HCT116 (cell line): ENCODE measurements at regions of chr17 and their contacts with region 1.

Region 1: DNA sequence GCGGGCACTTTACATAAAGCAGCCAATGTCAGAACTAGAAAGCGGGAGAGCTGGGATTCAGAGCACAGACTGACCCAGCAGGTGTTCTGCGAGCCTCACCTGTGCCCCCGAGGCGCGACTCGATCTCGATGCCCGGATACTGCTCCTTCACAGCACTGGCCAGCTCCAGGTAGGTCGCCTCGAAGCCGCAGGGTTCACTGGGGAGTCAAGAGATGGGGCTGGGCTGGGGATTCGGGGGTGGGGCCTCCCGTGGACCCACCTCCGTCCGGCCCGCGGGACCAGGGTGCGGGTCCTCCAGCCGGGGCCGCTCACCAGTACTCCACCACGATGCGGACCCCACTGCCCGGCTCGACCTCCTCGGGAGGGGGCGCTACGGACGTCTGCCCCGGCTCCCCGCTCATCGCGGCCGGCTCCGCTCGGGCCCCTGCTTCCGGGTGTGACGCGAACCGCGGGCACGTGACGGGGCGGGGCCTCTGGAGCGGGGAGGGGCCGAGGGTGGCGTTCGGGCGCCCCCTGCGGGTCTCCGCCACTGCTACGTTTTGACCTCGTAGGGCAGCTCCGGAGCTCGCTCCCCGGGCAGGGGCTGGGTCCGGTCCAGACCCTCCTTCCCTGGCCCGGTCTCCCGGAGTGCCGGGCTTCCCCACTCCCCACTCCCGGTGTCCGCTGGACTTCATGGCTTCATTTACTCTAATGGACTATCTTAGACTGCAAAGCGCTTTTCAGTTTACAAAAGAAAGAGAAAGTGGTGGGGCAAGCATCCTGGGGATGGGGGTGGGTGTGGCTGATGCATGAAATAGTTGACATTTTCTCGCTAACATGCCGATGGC is at the start of gene MIEN1:
- DNase-seq: peak; percentile 64
- ATAC-seq: peak; percentile 89
- H3K4me3 ChIP-seq: peak within 1 kb of the TSS; percentile 69 to 73
- H3K27ac ChIP-seq: peak within 1 kb of the TSS; percentile 77
- H3K4me1 ChIP-seq: peaks cover 3 to 24% of the 10 kb centered on the region in 2 experiments; a peak in 3 of 4 replicates
- H3K27me3 ChIP-seq: no peaks in the 10 kb centered on the region
- CTCF ChIP-seq: peak; percentile 71 to 87 (median 82)
- POLR2A ChIP-seq: peak; percentile 55
- RAD21 ChIP-seq: peak; percentile 75
- total RNA-seq, gene MIEN1: 73.9 TPM

Region 2: DNA sequence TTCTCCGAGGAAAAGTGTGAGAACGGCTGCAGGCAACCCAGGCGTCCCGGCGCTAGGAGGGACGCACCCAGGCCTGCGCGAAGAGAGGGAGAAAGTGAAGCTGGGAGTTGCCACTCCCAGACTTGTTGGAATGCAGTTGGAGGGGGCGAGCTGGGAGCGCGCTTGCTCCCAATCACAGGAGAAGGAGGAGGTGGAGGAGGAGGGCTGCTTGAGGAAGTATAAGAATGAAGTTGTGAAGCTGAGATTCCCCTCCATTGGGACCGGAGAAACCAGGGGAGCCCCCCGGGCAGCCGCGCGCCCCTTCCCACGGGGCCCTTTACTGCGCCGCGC is 30.5 kb before region 1 on chr17 and contains the start of gene ERBB2:
- CTCF ChIA-PET with region 1: interaction called, 14 read pairs
- POLR2A ChIA-PET with region 1: interaction called, 6 read pairs
- RAD21 ChIA-PET with region 1: no interaction called
- intact Hi-C with region 1: no loop called
- DNase-seq: peak; percentile 57
- ATAC-seq: peak; percentile 92
- H3K4me3 ChIP-seq: peak within 1 kb of the TSS; percentile 76 to 88
- H3K27ac ChIP-seq: peak within 1 kb of the TSS; percentile 76
- H3K4me1 ChIP-seq: peaks cover 20 to 44% of the 10 kb centered on the region in 2 experiments
- H3K27me3 ChIP-seq: no peaks in the 10 kb centered on the region
- CTCF ChIP-seq: no peak
- POLR2A ChIP-seq: peak; percentile 66
- RAD21 ChIP-seq: no peak
- total RNA-seq, gene ERBB2: 75.8 TPM

Region 3: GRCh38 chr17:39704821-39705551 is 25.3 kb before region 1 on chr17:
- CTCF ChIA-PET with region 1: interaction called, 14 read pairs
- POLR2A ChIA-PET with region 1: interaction called, 6 read pairs
- RAD21 ChIA-PET with region 1: no interaction called
- intact Hi-C with region 1: no loop called
- DNase-seq: no peak
- ATAC-seq: no peak
- H3K4me3 ChIP-seq: peak overlapping the region in 1 of 2 experiments; percentile 42; a peak in 2 of 4 replicates
- H3K27ac ChIP-seq: peak overlapping the region; percentile 61
- H3K4me1 ChIP-seq: peaks cover 37 to 55% of the 10 kb centered on the region in 2 experiments
- H3K27me3 ChIP-seq: no peaks in the 10 kb centered on the region
- CTCF ChIP-seq: peak in 2 of 3 experiments; percentile 35 to 47; a peak in 4 of 6 replicates
- POLR2A ChIP-seq: no peak
- RAD21 ChIP-seq: no peak

Region 4: DNA sequence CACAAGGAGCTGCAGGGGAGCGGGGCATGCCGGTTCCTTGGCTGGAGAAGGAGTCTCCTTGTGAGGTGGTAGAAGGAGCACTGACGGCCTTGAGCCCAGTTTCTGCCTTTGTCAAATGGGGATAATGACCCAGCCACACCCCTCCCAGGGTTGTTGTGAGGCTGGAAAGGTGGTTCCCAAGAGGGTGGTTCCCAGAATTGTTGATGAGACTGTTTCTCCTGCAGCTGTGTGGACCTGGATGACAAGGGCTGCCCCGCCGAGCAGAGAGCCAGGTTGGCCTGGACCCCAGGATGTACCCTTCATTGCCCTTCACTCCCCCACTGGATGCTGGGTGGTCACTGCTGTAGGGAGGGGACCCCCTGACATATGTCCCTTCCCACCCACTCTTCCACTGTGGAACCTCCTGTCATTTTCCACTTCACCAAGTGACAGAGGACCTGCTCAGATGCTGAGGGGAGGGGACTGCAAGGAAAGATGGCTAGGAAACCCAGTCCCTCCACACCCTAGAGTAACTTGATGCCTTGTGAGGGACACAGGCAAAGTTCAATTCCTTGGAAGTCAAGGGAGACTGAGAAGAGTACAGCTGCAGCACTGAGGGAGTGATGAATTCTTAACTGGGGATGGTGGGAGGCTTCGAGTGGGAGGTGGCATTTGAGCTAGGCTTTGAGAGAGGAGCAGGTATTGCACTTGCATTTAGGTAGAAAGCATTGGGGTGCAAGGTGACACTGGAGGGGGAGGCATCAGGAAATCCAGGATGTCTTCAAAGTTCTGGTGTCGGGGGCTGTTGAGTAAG is 10.5 kb before region 1 on chr17:
- CTCF ChIA-PET with region 1: interaction called, 27 read pairs
- POLR2A ChIA-PET with region 1: no interaction called
- RAD21 ChIA-PET with region 1: no interaction called
- intact Hi-C with region 1: no loop called
- DNase-seq: no peak
- ATAC-seq: no peak
- H3K4me3 ChIP-seq: no peak overlapping the region
- H3K27ac ChIP-seq: no peak overlapping the region
- H3K4me1 ChIP-seq: peaks cover 3 to 9% of the 10 kb centered on the region in 2 experiments; a peak in 2 of 4 replicates
- H3K27me3 ChIP-seq: no peaks in the 10 kb centered on the region
- CTCF ChIP-seq: no peak
- POLR2A ChIP-seq: no peak
- RAD21 ChIP-seq: no peak

Region 5: DNA sequence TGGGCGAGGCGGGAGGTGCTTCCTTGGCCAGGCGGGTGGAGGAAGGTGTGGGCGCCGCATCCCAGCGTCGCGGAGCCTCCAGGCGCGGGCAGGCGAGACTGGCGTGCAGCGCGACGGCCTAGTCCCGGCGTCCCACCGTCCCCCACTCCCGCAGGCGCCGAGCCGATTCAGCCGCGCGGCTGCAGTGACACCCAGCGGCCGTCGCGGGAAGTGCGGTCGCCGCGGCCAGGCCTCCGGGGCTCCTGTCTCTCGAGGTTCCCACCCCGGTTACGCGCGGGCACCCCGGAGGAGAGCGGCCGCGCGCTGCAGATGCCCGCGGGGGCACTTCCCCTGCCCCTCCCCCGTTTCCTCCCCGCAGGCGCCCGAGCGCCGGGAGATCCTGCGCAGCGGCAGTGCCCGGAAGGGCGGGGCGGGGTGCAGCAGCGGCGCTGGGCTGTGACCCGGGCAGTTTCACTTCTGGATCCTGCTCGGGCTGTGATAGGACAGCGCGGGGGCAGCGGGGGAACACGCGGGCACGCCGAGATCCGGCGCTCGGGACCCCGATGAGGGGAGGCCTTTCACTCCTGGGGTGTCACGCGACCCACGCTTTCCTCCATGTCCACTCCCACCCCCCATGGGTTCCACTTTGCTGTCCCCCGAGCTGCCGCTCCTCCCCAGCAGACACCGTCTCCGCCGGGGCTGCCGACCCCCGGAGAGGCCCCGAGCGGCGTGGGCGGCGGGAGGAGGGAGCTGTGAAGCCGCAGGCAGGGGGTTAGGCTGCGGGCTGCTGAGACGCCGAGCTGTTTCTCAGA is 24.0 kb after region 1 on chr17:
- CTCF ChIA-PET with region 1: interaction called, 10 read pairs
- POLR2A ChIA-PET with region 1: no interaction called
- RAD21 ChIA-PET with region 1: no interaction called
- intact Hi-C with region 1: no loop called
- DNase-seq: peak; percentile 73
- ATAC-seq: peak; percentile 87
- H3K4me3 ChIP-seq: peak overlapping the region; percentile 54 to 65
- H3K27ac ChIP-seq: peak overlapping the region; percentile 91
- H3K4me1 ChIP-seq: peaks cover 33 to 55% of the 10 kb centered on the region in 2 experiments
- H3K27me3 ChIP-seq: peaks cover under 1% of the 10 kb centered on the region; the same call in 1 of the 2 replicates
- CTCF ChIP-seq: peak; percentile 72 to 95 (median 74)
- POLR2A ChIP-seq: peak; percentile 78
- RAD21 ChIP-seq: peak; percentile 97

Region 6: GRCh38 chr17:39952680-39953470 is 222.6 kb after region 1 on chr17:
- CTCF ChIA-PET with region 1: no interaction called
- POLR2A ChIA-PET with region 1: no interaction called
- RAD21 ChIA-PET with region 1: no interaction called
- intact Hi-C with region 1: loop called (anchors 10 kb)
- DNase-seq: peak; percentile 90
- ATAC-seq: peak; percentile 95
- H3K4me3 ChIP-seq: peak overlapping the region; percentile 37 to 55
- H3K27ac ChIP-seq: peak overlapping the region; percentile 56
- H3K4me1 ChIP-seq: peaks cover 13 to 21% of the 10 kb centered on the region in 2 experiments
- H3K27me3 ChIP-seq: no peaks in the 10 kb centered on the region
- CTCF ChIP-seq: no peak
- POLR2A ChIP-seq: no peak
- RAD21 ChIP-seq: no peak

Region 7: DNA sequence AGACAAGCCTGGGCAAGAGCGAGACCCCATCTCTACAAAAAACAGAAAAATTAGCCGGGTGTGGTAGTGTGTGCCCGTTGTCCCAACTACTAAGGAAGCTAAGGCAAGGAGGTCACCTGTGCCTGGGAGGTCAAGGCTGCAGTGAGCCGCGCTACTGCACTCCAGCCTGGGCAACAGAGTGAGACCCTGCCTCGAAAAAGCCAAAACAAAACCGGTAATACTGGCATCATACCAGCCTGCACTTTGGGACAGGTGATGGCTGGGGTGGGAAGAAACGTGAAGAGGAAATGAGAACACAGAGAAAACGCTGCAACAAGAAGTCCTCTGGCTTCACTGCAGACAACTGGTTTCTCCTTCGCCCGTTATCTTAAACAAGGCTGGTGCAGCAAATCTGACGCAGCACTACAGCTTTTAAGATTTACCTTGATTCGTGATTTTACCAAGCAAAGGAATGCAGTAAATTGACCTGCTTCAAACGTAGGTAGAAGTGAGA is 409.3 kb after region 1 on chr17:
- CTCF ChIA-PET with region 1: no interaction called
- POLR2A ChIA-PET with region 1: no interaction called
- RAD21 ChIA-PET with region 1: no interaction called
- intact Hi-C with region 1: no loop called
- DNase-seq: no peak
- ATAC-seq: 0 out of 2 replicates have a peak, but pooled peaks have one; percentile 0
- H3K4me3 ChIP-seq: peak overlapping the region; percentile 81 to 95
- H3K27ac ChIP-seq: peak overlapping the region; percentile 95
- H3K4me1 ChIP-seq: peaks cover 6 to 21% of the 10 kb centered on the region in 2 experiments
- H3K27me3 ChIP-seq: no peaks in the 10 kb centered on the region
- CTCF ChIP-seq: no peak
- POLR2A ChIP-seq: no peak
- RAD21 ChIP-seq: no peak

Region 8: DNA sequence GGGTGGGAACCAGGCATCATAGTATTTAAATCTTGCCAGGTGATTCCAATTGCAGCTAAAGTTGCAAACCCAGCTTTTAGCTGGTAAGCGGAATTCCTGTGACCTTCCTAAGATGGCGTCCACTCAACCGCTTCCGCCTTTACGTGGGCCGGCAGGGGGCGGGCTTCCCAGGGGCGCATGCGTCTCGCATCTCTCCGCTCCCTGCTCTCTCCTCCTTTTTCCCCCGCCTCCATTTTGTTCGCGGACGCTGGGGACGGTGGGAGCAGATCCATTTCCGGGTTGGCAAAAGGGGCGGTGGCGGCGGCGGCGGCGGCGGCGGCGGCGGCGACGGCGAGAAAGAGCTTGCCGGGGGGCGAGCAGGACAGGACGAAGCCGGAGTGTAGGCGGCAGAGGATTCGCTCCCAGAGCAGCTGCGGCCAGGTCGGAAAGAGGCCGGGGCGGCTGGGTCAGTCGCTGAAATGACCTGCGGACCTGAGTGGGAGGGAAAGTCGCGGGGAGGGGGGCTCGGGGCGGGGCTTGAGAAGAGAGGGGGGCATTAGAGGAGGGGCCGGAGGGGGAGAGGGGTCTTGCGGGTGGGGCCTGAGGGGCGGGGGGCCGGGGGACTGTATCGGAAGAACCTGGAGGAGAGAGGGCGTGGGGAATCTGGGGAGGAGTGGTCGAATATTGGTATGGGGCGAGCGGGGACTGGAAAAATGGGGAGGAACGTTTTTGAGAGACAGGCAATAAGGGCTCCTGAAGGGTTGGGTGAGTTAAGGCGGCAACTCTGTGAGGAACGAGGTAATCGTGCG is 489.0 kb after region 1 on chr17 and contains the start of gene WIPF2:
- CTCF ChIA-PET with region 1: no interaction called
- POLR2A ChIA-PET with region 1: no interaction called
- RAD21 ChIA-PET with region 1: no interaction called
- intact Hi-C with region 1: no loop called
- DNase-seq: peak; percentile 89
- ATAC-seq: peak; percentile 92
- H3K4me3 ChIP-seq: peak within 1 kb of the TSS; percentile 53 to 80
- H3K27ac ChIP-seq: peak within 1 kb of the TSS; percentile 89
- H3K4me1 ChIP-seq: peaks cover 6 to 19% of the 10 kb centered on the region in 2 experiments
- H3K27me3 ChIP-seq: no peaks in the 10 kb centered on the region
- CTCF ChIP-seq: peak in 2 of 3 experiments; percentile 54 to 79; a peak in 4 of 6 replicates
- POLR2A ChIP-seq: no peak
- RAD21 ChIP-seq: no peak
- total RNA-seq, gene WIPF2: 30.4 TPM

Region 9: DNA sequence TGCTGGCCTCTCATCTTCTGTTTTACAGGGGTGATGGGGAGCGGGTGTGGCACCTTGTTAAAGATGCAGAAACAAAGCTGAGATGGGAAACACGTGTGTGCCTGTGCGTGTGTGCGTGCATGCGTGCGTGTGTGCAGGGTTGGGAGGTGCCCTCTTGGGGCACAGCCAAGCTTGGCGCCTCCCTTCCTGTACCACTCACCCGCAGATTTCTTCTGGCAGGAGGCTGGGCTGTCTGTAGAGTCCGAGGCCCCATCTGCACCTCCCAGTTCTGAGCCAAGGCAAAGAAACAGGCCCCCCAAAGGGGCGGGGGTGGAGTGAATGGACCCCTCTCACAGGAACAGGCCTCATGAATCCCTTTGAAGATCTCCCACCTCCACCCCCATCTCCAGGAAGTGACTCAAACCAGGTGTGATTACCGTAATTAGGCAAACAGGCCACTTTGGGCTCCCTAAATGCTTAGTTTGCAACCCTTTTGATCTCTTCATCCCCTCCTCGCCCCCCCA is 750.2 kb after region 1 on chr17:
- CTCF ChIA-PET with region 1: no interaction called
- POLR2A ChIA-PET with region 1: no interaction called
- RAD21 ChIA-PET with region 1: no interaction called
- intact Hi-C with region 1: no loop called
- DNase-seq: no peak
- ATAC-seq: peak; percentile 9; the same call in 1 of the 2 replicates
- H3K4me3 ChIP-seq: no peak overlapping the region
- H3K27ac ChIP-seq: peak overlapping the region; percentile 15; the same call in 1 of the 2 replicates
- H3K4me1 ChIP-seq: peaks cover 49 to 83% of the 10 kb centered on the region in 2 experiments
- H3K27me3 ChIP-seq: no peaks in the 10 kb centered on the region
- CTCF ChIP-seq: no peak
- POLR2A ChIP-seq: no peak
- RAD21 ChIP-seq: no peak